Activated T-helper 1 cell treated with anti-CD3 and anti-CD28 coated beads, Interleukin-12 subunit alpha, Interleukin-12 subunit beta, Interleukin-2, Interleukin-4 antibody, amounts not matched to agents 30 ng/mL and 10 ng/mL and 1 ng/mL, durations not matched to agents 14 hours and 24 hours and 36 hours (primary cell): ENCODE measurements at regions of chr11 and their contacts with region 1.

Region 1: DNA sequence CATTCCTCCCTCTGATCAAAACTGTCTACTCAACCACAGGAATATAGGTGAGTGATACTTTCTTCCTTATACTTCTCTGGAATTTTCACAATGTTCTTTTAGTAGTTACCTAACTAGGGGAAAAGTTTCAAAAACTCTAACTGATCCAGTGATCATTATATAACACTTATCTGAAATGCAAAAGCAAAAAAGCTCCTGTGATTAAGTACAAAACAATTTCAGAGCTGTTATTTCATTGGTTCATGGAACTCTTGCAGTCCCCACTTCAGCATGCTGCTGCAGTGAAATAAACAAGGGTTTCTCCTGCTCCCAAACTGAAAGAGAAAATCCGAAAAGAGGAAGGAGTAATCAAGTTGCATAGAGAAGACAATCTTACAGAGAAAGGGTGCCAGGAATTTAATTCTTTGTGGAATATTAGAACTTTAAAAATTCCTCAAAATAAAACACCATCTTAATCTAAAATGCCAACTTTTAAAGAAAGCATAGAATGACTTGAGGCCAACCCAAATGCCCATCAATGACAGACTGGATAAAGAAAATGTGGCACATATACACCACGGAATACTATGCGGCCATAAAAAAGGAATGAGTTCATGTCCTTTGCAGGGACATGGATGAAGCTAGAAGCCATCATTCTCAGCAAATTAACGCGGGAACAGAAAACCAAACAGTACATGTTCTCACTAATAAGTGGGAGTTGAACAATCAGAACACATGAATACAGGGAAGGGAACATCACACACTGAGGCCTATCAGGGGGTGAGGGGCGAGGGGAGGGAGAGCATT is 20.3 kb downstream of the PPP2R1B start:
- DNase-seq: no peak
- H3K4me3 Mint-ChIP-seq: no peak overlapping the region
- H3K27ac Mint-ChIP-seq: no peak overlapping the region
- H3K4me1 Mint-ChIP-seq: peaks cover 14% of the 10 kb centered on the region
- H3K27me3 Mint-ChIP-seq: no peaks in the 10 kb centered on the region

Region 2: DNA sequence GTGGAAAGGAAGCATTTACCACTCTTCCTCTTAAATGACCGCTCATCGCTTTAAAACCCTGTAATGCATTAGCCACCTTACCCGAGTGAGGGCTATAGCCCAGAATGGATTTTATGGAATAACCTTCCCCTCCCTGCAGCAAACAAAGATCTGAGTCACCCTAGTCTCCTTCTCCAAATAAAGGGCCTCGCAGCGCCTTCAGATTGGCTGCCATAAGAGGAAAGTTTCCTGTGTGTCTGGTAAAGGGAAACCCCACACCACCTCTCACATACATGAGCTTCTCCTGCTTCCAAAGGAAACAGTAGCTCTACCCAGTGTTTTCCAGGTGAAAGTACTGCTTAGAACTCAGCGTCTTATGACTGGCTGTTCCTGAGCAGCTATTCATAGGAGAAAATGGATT is 27.5 kb before region 1 on chr11:
- intact Hi-C with region 1: no loop called
- DNase-seq: no peak
- H3K4me3 Mint-ChIP-seq: no peak overlapping the region
- H3K27ac Mint-ChIP-seq: no peak overlapping the region
- H3K4me1 Mint-ChIP-seq: no peaks in the 10 kb centered on the region
- H3K27me3 Mint-ChIP-seq: no peaks in the 10 kb centered on the region

Region 3: DNA sequence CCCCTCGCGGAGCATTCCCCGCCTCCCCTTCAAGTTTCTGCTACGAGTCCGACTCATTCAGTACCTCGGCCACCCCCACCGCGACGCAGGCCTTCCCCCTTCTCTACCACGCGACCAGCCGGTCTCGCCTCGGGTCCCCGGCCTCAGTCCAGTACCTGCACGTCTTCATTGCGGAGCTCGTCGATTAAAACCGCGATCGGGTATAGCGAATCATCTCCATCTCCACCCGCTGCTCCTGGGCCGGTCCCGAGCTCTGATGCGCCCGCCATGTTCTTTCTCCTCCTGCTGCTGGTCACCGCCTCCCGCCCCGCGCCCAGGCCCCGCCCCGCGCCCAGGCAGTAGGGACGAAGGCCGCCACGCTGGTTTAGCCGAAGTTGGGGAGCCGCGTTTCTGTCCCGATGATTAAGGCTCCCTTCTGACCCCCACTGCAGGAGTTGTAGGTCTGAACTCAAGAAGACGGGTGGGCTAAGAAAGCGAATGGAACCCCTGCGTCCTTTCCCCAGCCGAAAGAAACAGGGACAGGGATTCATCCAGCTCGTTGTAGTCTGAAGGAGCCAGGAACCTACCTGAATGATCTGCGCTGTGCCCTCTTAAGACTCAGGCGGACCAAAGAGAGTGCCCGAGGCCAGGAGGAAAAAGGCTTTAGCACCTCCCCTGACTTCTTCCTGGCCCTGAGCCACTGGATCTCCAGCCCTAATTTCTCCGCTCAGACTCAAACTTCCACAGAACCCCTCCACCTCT is 20.4 kb after region 1 on chr11 and contains the start of gene PPP2R1B:
- intact Hi-C with region 1: loop called (anchors 2 kb)
- DNase-seq: peak; percentile 60
- H3K4me3 Mint-ChIP-seq: peak within 1 kb of the TSS; percentile 96
- H3K27ac Mint-ChIP-seq: peak within 1 kb of the TSS; percentile 97
- H3K4me1 Mint-ChIP-seq: peaks cover 43% of the 10 kb centered on the region
- H3K27me3 Mint-ChIP-seq: no peaks in the 10 kb centered on the region
- total RNA-seq, gene PPP2R1B: 58.1 and 61.4 TPM in 2 replicates

Region 4: DNA sequence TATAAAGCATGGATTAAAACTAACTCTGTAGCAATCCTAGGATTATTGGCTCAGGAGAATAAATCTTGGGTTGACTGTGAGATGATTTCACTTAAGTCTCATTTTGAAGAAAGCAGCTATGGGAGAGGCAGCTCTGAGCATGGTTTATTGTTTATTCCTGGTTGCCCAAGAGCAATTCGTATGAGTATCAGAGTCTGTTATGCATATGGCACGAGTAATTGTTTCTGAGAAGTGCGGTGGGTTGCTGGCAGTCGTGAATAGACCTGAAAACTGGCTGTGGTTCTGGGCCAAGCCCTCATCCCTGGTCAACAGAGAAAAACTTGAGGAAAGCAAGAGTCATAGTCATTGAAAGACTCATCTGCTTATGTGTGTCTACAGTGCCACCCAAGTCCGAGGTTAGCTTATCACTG is 218.0 kb after region 1 on chr11:
- intact Hi-C with region 1: no loop called
- DNase-seq: no peak
- H3K4me3 Mint-ChIP-seq: no peak overlapping the region
- H3K27ac Mint-ChIP-seq: no peak overlapping the region
- H3K4me1 Mint-ChIP-seq: no peaks in the 10 kb centered on the region
- H3K27me3 Mint-ChIP-seq: no peaks in the 10 kb centered on the region